Activated T-helper 2 cell treated with anti-CD3 and anti-CD28 coated beads, Interferon-gamma antibody, Interleukin-2, Interleukin-4, amounts not matched to agents 10 μg/mL and 5 μg/mL and 100 μg/mL, durations not matched to agents 14 hours and 24 hours and 36 hours (primary cell): ENCODE measurements at regions of chr15 and their contacts with region 1.

Region 1: GRCh38 chr15:67101911-67102598 is 36.7 kb downstream of the SMAD3 start:
- DNase-seq: peak; percentile 57
- H3K4me3 Mint-ChIP-seq: no peak overlapping the region
- H3K27ac Mint-ChIP-seq: no peak overlapping the region
- H3K4me1 Mint-ChIP-seq: peaks cover 61% of the 10 kb centered on the region
- H3K27me3 Mint-ChIP-seq: no peaks in the 10 kb centered on the region

Region 2: GRCh38 chr15:67065444-67066093 is 36.5 kb before region 1 on chr15 and contains the start of gene SMAD3:
- intact Hi-C with region 1: loop called (anchors 1 kb)
- DNase-seq: peak; percentile 78
- H3K4me3 Mint-ChIP-seq: peak within 1 kb of the TSS; percentile 81
- H3K27ac Mint-ChIP-seq: peak within 1 kb of the TSS; percentile 87
- H3K4me1 Mint-ChIP-seq: peaks cover 49% of the 10 kb centered on the region
- H3K27me3 Mint-ChIP-seq: peaks cover 20% of the 10 kb centered on the region
- total RNA-seq, gene SMAD3: 25.2 and 28.1 TPM in 2 replicates

Region 3: DNA sequence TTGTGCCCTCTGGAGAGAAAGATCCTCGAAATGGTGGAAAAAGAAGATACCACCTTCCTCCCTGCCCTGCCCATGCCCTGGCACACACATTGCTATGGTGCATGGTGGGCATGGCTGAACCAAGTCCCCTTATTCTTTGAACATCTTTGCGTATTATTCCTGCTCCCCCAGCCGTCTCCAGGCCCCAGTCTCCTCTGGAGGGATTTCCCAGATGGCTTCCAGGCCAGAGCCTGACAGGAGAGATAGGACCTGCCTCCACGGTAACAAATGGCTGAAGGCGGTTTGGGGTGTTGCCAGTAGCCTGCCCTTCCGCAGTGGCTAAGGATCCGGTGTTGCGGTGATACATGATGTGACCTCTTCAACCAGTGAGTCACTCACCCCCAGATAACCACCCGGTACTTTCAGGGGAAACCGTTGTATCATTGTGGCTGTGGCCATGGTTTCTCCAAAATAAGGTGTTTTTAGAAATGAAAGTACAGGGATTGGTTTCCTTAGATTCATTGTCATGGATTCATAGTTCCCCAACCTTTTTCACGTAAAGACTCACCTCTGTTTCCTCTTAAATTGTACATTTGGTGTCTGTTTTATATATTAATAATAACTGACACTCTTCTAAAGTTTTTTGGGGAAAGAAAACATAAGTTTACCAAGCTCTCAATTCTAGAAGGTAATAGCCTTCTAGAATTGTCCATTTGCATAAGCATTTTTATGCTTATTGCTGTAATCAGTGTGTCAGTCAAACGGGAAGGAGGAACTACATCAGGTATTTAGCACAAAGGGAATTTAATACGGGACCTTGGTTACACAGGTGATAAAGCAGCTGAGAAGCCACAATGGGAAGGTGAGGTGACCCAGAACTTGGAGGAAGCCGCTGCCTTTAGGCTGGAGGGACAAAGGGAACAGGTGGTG is 10.7 kb before region 1 on chr15:
- intact Hi-C with region 1: loop called (anchors 1 kb)
- DNase-seq: peak; percentile 80
- H3K4me3 Mint-ChIP-seq: peak overlapping the region; percentile 37
- H3K27ac Mint-ChIP-seq: peak overlapping the region; percentile 77
- H3K4me1 Mint-ChIP-seq: peaks cover 93% of the 10 kb centered on the region
- H3K27me3 Mint-ChIP-seq: no peaks in the 10 kb centered on the region

Region 4: GRCh38 chr15:67127965-67128364 is 25.9 kb after region 1 on chr15:
- intact Hi-C with region 1: loop called (anchors 2 kb)
- DNase-seq: no peak
- H3K4me3 Mint-ChIP-seq: no peak overlapping the region
- H3K27ac Mint-ChIP-seq: peak overlapping the region; percentile 45
- H3K4me1 Mint-ChIP-seq: peaks cover 67% of the 10 kb centered on the region
- H3K27me3 Mint-ChIP-seq: no peaks in the 10 kb centered on the region

Region 5: GRCh38 chr15:67150028-67150860 is 48.2 kb after region 1 on chr15:
- intact Hi-C with region 1: loop called (anchors 1 kb)
- DNase-seq: no peak
- H3K4me3 Mint-ChIP-seq: peak overlapping the region; percentile 46
- H3K27ac Mint-ChIP-seq: peak overlapping the region; percentile 71
- H3K4me1 Mint-ChIP-seq: peaks cover 60% of the 10 kb centered on the region
- H3K27me3 Mint-ChIP-seq: no peaks in the 10 kb centered on the region